ENCODE measurements at regions of chr9 and their contacts with region 1.

Region 1: GRCh38 chr9:27529316-27530278 is at the start of gene MOB3B:
- DNase-seq: peak; percentile 92
- ATAC-seq: peak; percentile 93
- total RNA-seq, gene MOB3B: 1.7 TPM

Region 2: DNA sequence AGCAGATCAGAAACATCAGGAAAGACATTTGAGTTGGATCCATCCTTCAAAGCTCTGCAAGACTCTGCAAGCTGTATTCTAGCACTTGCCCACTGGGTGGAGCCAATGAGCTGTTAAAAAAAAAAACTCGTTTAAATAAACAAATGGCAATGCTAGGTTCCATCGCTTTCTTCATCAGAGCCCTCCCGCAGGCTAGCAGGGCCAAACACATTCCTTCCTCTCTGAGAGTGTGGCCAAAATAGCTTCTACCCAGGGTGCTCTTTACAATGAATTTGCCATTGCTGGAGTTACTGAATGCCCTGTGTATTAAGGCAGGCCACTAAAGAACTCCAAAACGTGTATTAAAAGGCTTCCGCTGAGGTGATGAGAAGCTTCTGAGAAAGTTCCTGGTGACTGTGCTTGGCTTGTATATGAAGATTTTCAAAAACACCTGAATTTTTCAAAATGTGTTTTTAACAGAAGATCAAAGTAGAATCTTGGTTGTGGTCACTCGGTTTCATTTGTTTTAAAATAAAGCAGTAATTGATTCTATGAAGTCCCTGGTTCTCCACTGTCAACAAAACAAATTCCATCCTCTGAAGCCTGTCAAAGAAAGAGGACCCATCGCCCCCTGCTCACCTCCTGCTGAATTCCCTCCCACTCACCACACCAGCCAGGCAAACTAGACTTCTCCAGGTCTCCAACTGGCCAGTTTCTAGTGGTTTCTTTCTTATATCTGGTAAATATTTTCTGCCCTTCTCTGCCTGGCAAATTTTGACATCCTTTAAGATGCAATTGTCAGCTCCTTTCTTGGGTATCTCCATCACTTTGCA is 196.2 kb before region 1 on chr9:
- intact Hi-C with region 1: loop called (anchors 5 kb)
- DNase-seq: peak; percentile 59
- ATAC-seq: peak; percentile 97

Region 3: DNA sequence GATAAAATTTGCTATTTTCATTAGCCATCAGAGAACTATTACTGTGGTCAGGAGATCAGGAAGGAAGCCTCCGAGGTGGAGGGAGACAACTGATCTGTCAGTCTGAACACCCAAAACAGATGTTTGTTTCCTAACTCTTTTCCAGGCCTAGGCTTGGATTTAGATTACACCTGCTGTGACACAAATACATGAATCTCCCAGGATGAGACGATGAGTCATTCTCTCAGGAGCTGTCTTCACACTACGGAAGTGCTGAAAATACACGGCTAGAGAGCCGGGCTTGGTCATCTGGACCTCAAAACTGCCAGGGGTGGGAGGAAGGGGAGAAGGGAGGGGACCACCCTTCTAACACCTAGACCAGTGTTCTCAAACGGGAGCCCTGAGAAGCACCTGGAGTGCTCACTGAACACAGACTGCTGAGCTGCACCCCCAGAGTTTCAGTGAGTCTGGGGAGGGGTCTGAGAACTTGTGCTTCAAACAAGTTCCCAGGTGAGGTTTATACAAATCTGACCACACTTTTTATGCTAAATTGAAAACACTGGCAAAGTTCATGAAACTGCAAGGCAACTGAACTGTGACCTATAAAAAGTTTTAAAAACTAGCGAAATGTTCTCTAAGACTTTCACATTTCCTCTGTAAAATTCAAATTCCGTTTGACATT is 152.3 kb before region 1 on chr9:
- intact Hi-C with region 1: no loop called
- DNase-seq: no peak
- ATAC-seq: no peak

Region 4: DNA sequence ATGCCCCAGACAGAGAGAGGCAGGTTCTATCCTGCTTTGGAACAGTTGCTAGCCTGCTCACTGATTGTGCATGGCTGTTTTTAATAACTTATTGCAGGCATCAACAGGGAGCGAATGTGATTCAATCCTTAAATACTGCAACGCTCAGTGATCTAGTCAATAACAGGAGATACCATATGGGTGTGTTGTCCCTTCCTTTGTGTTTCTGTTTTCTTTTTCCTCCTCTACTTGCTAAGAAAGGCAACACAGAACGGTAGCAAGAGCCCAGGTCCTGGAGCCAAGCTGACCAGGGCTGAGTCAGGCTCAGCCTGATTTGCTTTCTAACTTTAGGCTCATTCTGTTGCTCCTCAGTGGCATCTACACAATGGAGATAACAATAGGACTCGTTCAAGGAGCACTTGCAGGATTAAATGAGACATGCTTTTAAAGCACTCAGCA is 134.1 kb before region 1 on chr9:
- intact Hi-C with region 1: loop called (anchors 5 kb)
- DNase-seq: no peak
- ATAC-seq: peak; percentile 91

Region 5: DNA sequence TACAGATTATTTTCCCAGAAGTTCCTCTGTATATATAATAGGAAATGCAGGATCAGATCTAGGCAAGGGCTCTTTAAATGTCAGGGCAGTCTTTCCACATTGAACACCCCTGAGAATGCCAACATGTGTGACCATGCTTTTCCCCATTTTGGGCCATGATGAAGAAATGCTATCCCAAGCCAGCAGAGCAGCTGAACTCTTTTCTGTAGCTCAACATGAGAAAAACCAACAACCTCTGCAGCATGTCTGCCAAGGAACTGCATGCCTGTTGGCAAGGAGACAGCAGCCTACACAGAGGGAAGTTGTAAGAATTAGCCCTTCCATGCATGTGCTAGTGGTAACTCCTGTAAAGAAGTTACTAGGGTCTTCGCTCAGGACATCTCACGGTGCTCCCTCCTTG is 15.0 kb before region 1 on chr9:
- intact Hi-C with region 1: no loop called
- DNase-seq: no peak
- ATAC-seq: peak; percentile 77

Measured in left ventricle myocardium superior (tissue), 1 donor.